Thyroid gland (tissue), 4 donors: ENCODE measurements at regions of chr2 and their contacts with region 1.

Region 1: GRCh38 chr2:111897924-111898702 is at the start of gene MERTK:
- DNase-seq: peak; percentile 94 to 95
- H3K4me3 ChIP-seq: peak within 1 kb of the TSS; percentile 73 to 89 (median 85)
- H3K27ac ChIP-seq: peak within 1 kb of the TSS; percentile 89 to 92 (median 89)
- H3K4me1 ChIP-seq: peaks cover 0 to 8% of the 10 kb centered on the region in 2 donors
- H3K27me3 ChIP-seq: no peaks in the 10 kb centered on the region
- CTCF ChIP-seq: peak; percentile 17 to 87 (median 68)
- POLR2A ChIP-seq: peak; percentile 64 to 91
- total RNA-seq, gene MERTK: 23.5 to 36.7 (median 32.9) TPM

Region 2: DNA sequence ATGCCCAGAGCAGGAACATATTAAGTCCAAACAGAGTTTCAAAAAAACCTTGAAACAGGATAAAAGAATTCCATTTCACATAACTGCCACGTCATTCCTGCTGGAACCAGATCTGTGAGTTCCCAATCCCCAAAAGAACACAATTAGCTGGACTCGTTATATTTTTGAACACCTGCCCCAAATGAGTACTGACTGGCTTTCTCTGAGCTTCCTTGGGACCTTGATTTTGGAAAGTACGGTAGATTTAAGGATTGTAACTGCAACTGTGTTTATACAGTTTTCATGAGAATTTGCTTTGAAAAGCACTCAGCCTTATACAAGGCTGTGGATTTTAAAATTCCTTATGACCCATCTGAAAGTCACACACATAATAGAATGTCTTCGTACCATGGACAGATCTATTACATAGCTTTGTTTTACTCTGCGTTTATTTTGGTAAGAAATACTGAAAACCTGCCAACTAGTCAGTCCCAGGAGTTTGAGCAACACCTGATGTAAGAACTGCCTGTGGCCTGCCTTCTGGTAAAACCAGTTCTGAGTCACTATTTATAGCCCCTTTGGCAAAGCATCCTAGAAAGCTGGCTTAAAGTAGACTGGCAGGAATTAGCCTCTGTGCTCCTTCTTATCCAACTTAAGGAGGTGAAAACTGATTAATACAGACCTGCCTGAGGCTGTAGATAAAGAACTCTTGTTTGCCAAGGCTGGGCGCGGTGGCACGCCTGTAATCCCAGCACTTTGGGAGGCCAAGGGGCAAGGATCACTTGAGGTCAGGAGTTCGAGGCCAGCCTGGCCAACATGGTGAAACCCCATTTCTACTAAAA is 48.4 kb after region 1 on chr2:
- intact Hi-C with region 1: loop called (anchors 5 kb)
- DNase-seq: peak; percentile 73 to 74
- H3K4me3 ChIP-seq: no peak overlapping the region
- H3K27ac ChIP-seq: peak overlapping the region; percentile 92 to 97 (median 95)
- H3K4me1 ChIP-seq: peaks cover 29 to 33% of the 10 kb centered on the region in 2 donors
- H3K27me3 ChIP-seq: no peaks in the 10 kb centered on the region
- CTCF ChIP-seq: no peak
- POLR2A ChIP-seq: no peak

Region 3: GRCh38 chr2:112048887-112049286 is 150.8 kb after region 1 on chr2:
- intact Hi-C with region 1: loop called (anchors 2 kb)
- DNase-seq: peak in 1 of 2 donors; percentile 20
- H3K4me3 ChIP-seq: no peak overlapping the region
- H3K27ac ChIP-seq: no peak overlapping the region
- H3K4me1 ChIP-seq: peaks cover 4 to 8% of the 10 kb centered on the region in 2 donors
- H3K27me3 ChIP-seq: no peaks in the 10 kb centered on the region
- CTCF ChIP-seq: peak; percentile 67 to 92 (median 80)
- POLR2A ChIP-seq: no peak

Region 4: DNA sequence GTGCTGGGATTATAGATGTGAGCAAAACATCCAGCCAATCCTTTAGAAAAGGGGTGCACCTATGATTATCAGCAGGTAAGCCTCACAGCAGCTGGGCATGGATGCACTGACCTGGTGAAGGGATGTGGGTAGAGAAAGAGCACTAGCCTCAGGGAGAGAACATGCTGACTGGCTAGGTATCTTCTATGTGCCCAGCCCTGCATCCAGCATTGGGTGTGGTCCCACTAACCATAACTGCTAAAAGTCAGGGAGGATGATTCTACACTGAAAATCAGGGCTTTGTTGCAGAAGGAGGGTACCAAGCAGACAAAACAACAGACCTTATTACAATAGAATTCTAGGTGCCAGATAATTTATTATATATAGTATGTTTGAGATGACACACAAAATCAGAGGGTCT is 556.5 kb after region 1 on chr2:
- intact Hi-C with region 1: no loop called
- DNase-seq: no peak
- H3K4me3 ChIP-seq: no peak overlapping the region
- H3K27ac ChIP-seq: no peak overlapping the region
- H3K4me1 ChIP-seq: no peaks in the 10 kb centered on the region
- H3K27me3 ChIP-seq: no peaks in the 10 kb centered on the region
- CTCF ChIP-seq: no peak
- POLR2A ChIP-seq: no peak